ENCODE measurements at regions of chr5 and their contacts with region 1.

Region 1: GRCh38 chr5:172283020-172283861 is at the start of gene UBTD2:
- DNase-seq: peak; percentile 45
- ATAC-seq: peak; percentile 83
- H3K4me3 ChIP-seq: peak within 1 kb of the TSS; percentile 82 to 89 (median 87)
- H3K27ac ChIP-seq: peak within 1 kb of the TSS; percentile 84
- H3K4me1 ChIP-seq: peaks cover 64% of the 10 kb centered on the region
- H3K27me3 ChIP-seq: no peaks in the 10 kb centered on the region; a peak in 1 of 5 replicates
- CTCF ChIP-seq: peak; percentile 53
- EP300 ChIP-seq: no peak
- POLR2A ChIP-seq: no peak
- RAD21 ChIP-seq: peak; percentile 73
- total RNA-seq, gene UBTD2: 24.1 and 32.9 TPM in 2 replicates

Region 2: DNA sequence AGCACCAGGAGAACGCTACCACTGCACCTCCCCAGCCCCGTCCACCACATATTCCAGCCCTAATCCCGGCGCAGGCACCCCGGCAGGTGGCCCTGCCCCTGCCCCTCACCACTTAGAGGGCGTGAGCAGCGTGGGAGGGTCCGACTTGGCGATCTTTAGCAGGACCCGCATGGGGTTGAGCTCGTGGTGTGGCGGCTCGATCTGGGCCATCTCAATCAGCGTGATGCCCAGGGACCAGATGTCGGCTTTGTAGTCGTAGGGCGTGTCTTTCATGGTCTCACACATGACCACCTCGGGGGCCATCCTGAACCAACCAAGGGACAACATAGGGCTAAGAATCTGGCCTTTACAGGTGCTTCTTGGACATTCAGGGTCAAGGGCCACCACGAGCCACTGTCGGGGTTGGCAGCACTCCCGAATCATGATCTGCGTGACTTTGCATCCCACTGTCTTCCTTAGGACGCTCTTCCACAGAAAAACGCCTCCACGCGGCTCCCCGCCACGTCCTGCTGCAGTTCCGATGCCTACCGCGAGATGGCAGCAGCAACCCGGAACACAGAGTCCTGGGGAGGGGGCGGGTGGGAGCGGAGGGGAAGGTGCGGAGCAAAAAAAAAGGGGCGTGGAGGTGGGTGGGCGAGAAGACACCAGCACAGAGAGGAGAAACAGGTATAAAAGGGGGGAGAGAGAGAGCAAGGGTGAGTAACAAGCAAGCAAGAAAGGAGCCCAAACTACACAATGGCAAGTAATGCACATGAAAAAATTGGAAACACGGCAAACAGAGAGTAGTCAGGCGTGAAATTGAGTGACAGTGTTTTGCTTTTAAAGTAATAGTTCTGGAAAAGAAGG is 176.5 kb before region 1 on chr5:
- CTCF ChIA-PET with region 1: no interaction called
- POLR2A ChIA-PET with region 1: no interaction called
- in situ Hi-C with region 1: loop called (anchors 10 kb)
- intact Hi-C with region 1: no loop called
- DNase-seq: no peak
- ATAC-seq: peak; percentile 53
- H3K4me3 ChIP-seq: no peak overlapping the region
- H3K27ac ChIP-seq: no peak overlapping the region
- H3K4me1 ChIP-seq: peaks cover 23% of the 10 kb centered on the region
- H3K27me3 ChIP-seq: no peaks in the 10 kb centered on the region
- CTCF ChIP-seq: peak; percentile 90
- EP300 ChIP-seq: no peak
- POLR2A ChIP-seq: no peak
- RAD21 ChIP-seq: peak; percentile 53; the same call in 1 of the 2 replicates

Region 3: GRCh38 chr5:172175263-172175719 is 108.0 kb before region 1 on chr5:
- CTCF ChIA-PET with region 1: no interaction called
- POLR2A ChIA-PET with region 1: interaction called, 10 read pairs
- in situ Hi-C with region 1: no loop called
- intact Hi-C with region 1: no loop called
- DNase-seq: peak; percentile 25
- ATAC-seq: peak; percentile 29
- H3K4me3 ChIP-seq: no peak overlapping the region
- H3K27ac ChIP-seq: no peak overlapping the region
- H3K4me1 ChIP-seq: peaks cover 44% of the 10 kb centered on the region
- H3K27me3 ChIP-seq: no peaks in the 10 kb centered on the region
- CTCF ChIP-seq: no peak
- EP300 ChIP-seq: no peak
- POLR2A ChIP-seq: 0 out of 4 replicates have a peak, but pooled peaks of 1 of the 2 experiments have one; percentile 29
- RAD21 ChIP-seq: no peak

Region 4: GRCh38 chr5:172207511-172207910 is 75.7 kb before region 1 on chr5:
- CTCF ChIA-PET with region 1: no interaction called
- POLR2A ChIA-PET with region 1: no interaction called
- in situ Hi-C with region 1: no loop called
- intact Hi-C with region 1: loop called (anchors 5 kb)
- DNase-seq: no peak
- ATAC-seq: no peak
- H3K4me3 ChIP-seq: no peak overlapping the region
- H3K27ac ChIP-seq: no peak overlapping the region
- H3K4me1 ChIP-seq: no peaks in the 10 kb centered on the region
- H3K27me3 ChIP-seq: no peaks in the 10 kb centered on the region
- CTCF ChIP-seq: no peak
- EP300 ChIP-seq: no peak
- POLR2A ChIP-seq: no peak
- RAD21 ChIP-seq: no peak

Region 5: DNA sequence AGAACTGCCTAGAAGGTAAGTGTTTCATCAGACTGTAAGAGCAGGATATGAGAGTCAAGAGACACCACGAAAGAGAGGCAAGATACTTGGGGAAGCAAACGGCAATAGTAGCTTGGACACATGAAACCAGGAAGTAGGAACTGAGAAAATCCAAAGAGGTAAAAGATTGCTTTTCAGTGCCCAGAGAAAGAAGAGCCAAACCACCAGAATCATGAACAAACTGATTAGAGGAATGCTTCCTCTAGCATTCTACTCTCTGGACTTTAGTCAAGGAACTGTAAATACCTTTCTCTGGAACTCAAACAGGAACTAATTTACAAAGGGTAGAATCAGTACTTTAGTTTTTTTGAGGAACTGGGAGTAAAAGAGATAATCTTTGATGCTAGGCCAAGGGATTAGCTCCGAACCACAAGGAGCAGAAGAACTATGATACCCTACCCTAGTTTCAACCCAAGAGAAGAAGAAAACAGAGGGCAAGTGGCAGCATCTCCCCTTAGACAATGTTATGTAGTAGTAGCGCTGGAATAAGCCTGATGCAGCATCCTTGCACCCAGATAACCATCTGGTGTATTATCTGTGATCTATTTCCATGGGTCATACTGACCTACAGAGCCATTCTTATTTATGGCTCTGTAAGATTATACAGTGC is 48.0 kb before region 1 on chr5:
- CTCF ChIA-PET with region 1: no interaction called
- POLR2A ChIA-PET with region 1: interaction called, 8 read pairs
- in situ Hi-C with region 1: no loop called
- intact Hi-C with region 1: loop called (anchors 5 kb)
- DNase-seq: peak; percentile 73
- ATAC-seq: peak; percentile 78
- H3K4me3 ChIP-seq: peak overlapping the region in 1 of 3 experiments; percentile 42; a peak in 1 of 6 replicates
- H3K27ac ChIP-seq: peak overlapping the region; percentile 65
- H3K4me1 ChIP-seq: peaks cover 63% of the 10 kb centered on the region
- H3K27me3 ChIP-seq: no peaks in the 10 kb centered on the region
- CTCF ChIP-seq: no peak
- EP300 ChIP-seq: peak in 1 of 2 experiments; percentile 48; a peak in 1 of 4 replicates
- POLR2A ChIP-seq: no peak
- RAD21 ChIP-seq: no peak